ENCODE measurements at regions of chr19 and their contacts with region 1.

Region 1: GRCh38 chr19:45770192-45771101 is 1.4 kb upstream of the SIX5 start:
- DNase-seq: peak; percentile 98
- H3K4me3 ChIP-seq: peak overlapping the region; percentile 13 to 49 (median 45)
- H3K27ac ChIP-seq: peak overlapping the region; percentile 21
- H3K4me1 ChIP-seq: peaks cover 14% of the 10 kb centered on the region
- H3K27me3 ChIP-seq: no peaks in the 10 kb centered on the region
- CTCF ChIP-seq: peak; percentile 92 to 98
- POLR2A ChIP-seq: peak; percentile 70

Region 2: DNA sequence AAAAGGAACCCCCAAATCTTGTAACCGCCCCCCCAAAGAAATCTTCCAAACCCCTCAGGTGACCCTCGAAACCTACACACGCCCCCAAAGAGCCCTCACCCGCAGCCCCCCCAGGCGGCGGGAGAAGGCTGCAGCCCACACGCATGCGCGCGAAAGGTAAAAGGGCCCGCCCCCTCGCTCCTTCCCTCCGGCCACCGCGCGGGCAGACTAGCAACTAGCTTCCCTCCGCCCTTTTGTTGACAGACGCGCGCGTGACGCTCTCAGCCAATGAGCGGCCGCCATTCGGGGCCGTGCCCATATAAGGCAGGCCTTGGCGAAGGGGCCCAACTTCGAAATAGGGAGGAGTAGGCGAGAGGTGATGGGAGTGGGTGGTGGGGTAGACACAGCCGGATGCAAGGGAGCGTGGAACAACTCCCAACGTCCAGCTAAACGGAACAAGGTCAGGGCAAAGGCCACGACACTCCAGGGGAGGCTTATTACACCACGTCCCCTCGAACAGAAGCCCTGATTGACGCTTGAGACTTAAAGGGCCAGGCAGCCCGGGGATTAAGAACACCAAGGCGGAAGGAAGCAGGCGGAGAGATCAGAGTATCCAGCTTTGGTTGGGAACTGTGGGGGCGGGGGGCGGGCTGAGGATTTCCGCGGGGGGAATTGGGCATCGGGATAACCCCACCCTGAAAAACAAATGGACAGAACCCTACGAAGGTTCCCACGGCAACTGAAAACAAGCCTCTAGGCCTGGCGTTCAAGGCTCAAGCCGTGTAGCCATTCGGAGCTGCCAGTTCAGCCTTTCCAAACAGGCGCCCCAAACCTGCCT is 53.1 kb before region 1 on chr19:
- CTCF ChIA-PET with region 1: interaction called, 51 read pairs
- POLR2A ChIA-PET with region 1: interaction called, 24 read pairs
- dilution Hi-C with region 1: no loop called
- intact Hi-C with region 1: loop called (anchors 1 kb)
- DNase-seq: peak; percentile 100
- H3K4me3 ChIP-seq: peak overlapping the region; percentile 54 to 93 (median 61)
- H3K27ac ChIP-seq: peak overlapping the region; percentile 43
- H3K4me1 ChIP-seq: peaks cover 20% of the 10 kb centered on the region
- H3K27me3 ChIP-seq: no peaks in the 10 kb centered on the region
- CTCF ChIP-seq: peak in 1 of 2 donors; percentile 33
- POLR2A ChIP-seq: no peak

Region 3: DNA sequence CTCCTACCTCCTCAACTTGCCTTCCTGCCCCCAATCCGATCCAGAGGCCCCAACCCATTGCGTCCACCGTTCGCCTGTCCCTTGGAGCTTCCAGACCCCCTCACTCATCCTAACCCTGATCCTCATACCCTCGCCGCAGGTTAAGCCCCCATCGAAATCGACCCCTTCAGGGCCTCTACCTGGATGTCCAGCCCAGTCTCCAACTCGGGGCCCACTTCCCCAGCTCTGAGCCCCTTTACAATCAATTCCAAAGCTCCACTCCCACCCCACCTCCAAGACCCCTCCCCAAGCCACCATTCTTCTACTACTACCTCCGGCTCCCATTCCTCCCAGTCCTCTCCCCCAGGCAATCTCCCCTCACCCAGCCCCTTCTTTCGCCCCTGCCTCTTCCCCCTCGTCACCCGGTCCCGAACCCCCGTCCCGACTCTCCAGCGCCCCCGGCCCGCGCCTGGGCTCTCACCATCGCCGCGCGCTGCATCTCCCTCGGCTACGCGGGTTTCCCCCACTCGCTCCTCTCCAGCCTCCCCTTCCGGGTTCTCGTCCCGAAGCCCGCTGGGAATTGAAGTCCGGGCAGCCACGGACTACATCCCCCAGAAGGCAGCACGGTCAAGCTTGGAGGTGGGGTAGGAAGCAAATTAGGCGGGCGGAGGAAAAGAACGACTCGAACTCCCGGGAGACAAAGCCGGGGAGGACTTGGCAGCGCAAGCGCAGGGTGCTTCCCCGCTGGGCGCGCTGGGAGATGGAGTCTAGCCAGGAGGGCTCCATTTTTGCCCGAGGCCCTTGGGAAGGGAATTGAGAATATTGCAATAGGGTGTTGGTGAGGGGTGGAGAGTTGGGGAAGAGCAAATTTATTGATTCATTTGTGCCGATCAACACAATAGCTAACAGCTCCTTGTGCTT is 39.8 kb before region 1 on chr19 and contains the start of gene FBXO46:
- CTCF ChIA-PET with region 1: interaction called, 11 read pairs
- POLR2A ChIA-PET with region 1: interaction called, 9 read pairs
- dilution Hi-C with region 1: no loop called
- intact Hi-C with region 1: loop called (anchors 1 kb)
- DNase-seq: peak; percentile 99
- H3K4me3 ChIP-seq: peak within 1 kb of the TSS; percentile 81 to 83 (median 82)
- H3K27ac ChIP-seq: peak within 1 kb of the TSS; percentile 28
- H3K4me1 ChIP-seq: peaks cover 6% of the 10 kb centered on the region
- H3K27me3 ChIP-seq: no peaks in the 10 kb centered on the region
- CTCF ChIP-seq: peak in 1 of 2 donors; percentile 36
- POLR2A ChIP-seq: peak; percentile 30
- total RNA-seq, gene FBXO46: 18.3 and 21.2 TPM in 2 replicates

Region 4: GRCh38 chr19:45757691-45758090 is 12.8 kb before region 1 on chr19:
- CTCF ChIA-PET with region 1: interaction called, 10 read pairs
- POLR2A ChIA-PET with region 1: interaction called, 4 read pairs
- dilution Hi-C with region 1: no loop called
- intact Hi-C with region 1: no loop called
- DNase-seq: no peak
- H3K4me3 ChIP-seq: no peak overlapping the region
- H3K27ac ChIP-seq: no peak overlapping the region
- H3K4me1 ChIP-seq: no peaks in the 10 kb centered on the region
- H3K27me3 ChIP-seq: no peaks in the 10 kb centered on the region
- CTCF ChIP-seq: no peak
- POLR2A ChIP-seq: no peak

Region 5: GRCh38 chr19:45792470-45793177 is 22.2 kb after region 1 on chr19 and contains the start of gene DMWD:
- CTCF ChIA-PET with region 1: interaction called, 29 read pairs
- POLR2A ChIA-PET with region 1: interaction called, 6 read pairs
- dilution Hi-C with region 1: no loop called
- intact Hi-C with region 1: loop called (anchors 1 kb)
- DNase-seq: peak; percentile 99
- H3K4me3 ChIP-seq: peak within 1 kb of the TSS; percentile 83 to 88 (median 85)
- H3K27ac ChIP-seq: peak within 1 kb of the TSS; percentile 57
- H3K4me1 ChIP-seq: peaks cover 16% of the 10 kb centered on the region
- H3K27me3 ChIP-seq: no peaks in the 10 kb centered on the region
- CTCF ChIP-seq: no peak
- POLR2A ChIP-seq: peak; percentile 89
- total RNA-seq, gene DMWD: 81.1 and 81.6 TPM in 2 replicates

Region 6: GRCh38 chr19:45798995-45799517 is 28.6 kb after region 1 on chr19:
- CTCF ChIA-PET with region 1: interaction called, 125 read pairs
- POLR2A ChIA-PET with region 1: interaction called, 3 read pairs
- dilution Hi-C with region 1: no loop called
- intact Hi-C with region 1: loop called (anchors 1 kb)
- DNase-seq: peak; percentile 79
- H3K4me3 ChIP-seq: no peak overlapping the region
- H3K27ac ChIP-seq: no peak overlapping the region
- H3K4me1 ChIP-seq: no peaks in the 10 kb centered on the region
- H3K27me3 ChIP-seq: no peaks in the 10 kb centered on the region
- CTCF ChIP-seq: peak; percentile 70 to 77
- POLR2A ChIP-seq: no peak

Region 7: DNA sequence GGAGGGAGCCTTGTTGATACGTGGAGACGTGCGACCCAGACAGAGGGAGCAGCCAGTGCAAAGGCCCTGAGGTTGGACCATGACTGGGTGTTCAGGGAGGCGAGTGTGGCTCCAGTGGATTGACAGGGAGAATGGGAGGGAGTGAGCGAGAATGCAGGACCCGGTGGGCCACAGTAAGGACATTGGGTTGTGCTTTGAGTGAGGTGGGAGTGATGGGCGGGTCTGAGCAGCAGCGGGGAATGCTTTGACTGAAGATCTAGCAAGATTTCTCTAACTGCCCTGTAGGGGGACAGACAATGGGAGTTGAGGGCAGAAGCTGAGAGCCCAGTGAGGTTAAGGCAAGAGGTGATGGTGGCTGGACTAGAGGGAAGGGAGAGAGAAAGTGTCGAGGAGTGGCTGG is 151.8 kb after region 1 on chr19:
- CTCF ChIA-PET with region 1: no interaction called
- POLR2A ChIA-PET with region 1: no interaction called
- dilution Hi-C with region 1: no loop called
- intact Hi-C with region 1: no loop called
- DNase-seq: no peak
- H3K4me3 ChIP-seq: no peak overlapping the region
- H3K27ac ChIP-seq: no peak overlapping the region
- H3K4me1 ChIP-seq: no peaks in the 10 kb centered on the region
- H3K27me3 ChIP-seq: peaks cover 0 to 3% of the 10 kb centered on the region in 2 experiments
- CTCF ChIP-seq: peak in 1 of 2 donors; percentile 30
- POLR2A ChIP-seq: no peak